Activated CD8-positive, alpha-beta T cell treated with anti-CD3 and anti-CD28 coated beads for 36 hours (primary cell): ENCODE measurements at regions of chr15 and their contacts with region 1.

Region 1: GRCh38 chr15:81296673-81297072 is 27.3 kb downstream of the STARD5 start:
- DNase-seq: peak; percentile 89
- ATAC-seq: peak; percentile 49
- H3K4me3 Mint-ChIP-seq: peak overlapping the region; percentile 98
- H3K27ac Mint-ChIP-seq: peak overlapping the region; percentile 98
- H3K4me1 Mint-ChIP-seq: peaks cover 51% of the 10 kb centered on the region
- H3K27me3 Mint-ChIP-seq: no peaks in the 10 kb centered on the region
- CTCF ChIP-seq: no peak

Region 2: DNA sequence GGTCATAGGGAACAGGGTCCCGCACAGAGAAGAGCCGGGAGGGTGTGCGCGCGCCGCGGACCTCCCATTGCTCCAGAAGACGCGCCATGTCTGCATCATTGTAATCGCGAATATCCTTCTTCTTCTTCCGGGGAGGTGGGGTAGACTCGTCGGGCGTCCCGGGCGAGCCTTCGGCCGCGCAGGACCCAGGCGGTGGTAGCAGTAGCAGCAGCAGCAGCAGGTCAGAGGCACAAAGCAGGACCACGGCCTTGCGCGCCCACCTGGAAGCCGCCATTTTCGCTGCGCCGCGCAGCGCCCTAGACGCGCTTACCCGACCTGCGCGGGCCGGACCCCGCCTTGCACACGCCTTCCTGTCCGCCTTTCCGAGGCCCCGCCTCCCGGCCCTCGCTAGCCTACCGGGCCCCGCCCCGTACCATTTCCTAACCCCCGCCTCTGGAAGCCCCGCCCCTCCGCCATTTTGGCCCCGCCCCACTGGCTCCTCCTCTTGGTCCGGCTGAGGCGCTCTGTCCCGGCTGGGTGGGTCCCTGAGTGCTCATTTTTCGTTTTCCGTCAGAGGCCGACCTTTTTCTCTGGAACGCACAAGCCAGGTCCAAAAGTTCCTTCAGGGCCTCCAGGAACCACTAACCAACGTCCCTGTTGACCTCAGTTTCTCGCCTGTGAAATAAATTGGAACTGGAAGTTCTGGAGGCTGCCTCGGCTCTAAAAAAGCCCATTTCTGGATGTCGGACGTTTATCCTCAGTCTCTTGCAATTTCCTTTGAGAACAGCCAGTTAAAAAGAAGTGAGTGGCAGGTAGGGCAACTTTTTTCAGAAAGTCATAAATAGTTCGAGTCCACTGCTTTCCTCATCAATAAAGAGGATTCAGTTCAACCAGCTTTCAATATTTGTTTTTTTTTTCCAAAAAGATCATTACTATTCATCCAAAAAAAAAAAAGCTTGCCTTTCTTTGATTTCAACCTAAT is 306.9 kb before region 1 on chr15 and contains the start of gene MESD:
- CTCF ChIA-PET with region 1: no interaction called
- POLR2A ChIA-PET with region 1: no interaction called
- intact Hi-C with region 1: loop called (anchors 10 kb)
- DNase-seq: peak; percentile 99
- ATAC-seq: peak; percentile 99
- H3K4me3 Mint-ChIP-seq: peak within 1 kb of the TSS; percentile 95
- H3K27ac Mint-ChIP-seq: peak within 1 kb of the TSS; percentile 93
- H3K4me1 Mint-ChIP-seq: peaks cover 44% of the 10 kb centered on the region
- H3K27me3 Mint-ChIP-seq: no peaks in the 10 kb centered on the region
- CTCF ChIP-seq: no peak
- total RNA-seq, gene MESD: 15.8 to 16.5 TPM

Region 3: DNA sequence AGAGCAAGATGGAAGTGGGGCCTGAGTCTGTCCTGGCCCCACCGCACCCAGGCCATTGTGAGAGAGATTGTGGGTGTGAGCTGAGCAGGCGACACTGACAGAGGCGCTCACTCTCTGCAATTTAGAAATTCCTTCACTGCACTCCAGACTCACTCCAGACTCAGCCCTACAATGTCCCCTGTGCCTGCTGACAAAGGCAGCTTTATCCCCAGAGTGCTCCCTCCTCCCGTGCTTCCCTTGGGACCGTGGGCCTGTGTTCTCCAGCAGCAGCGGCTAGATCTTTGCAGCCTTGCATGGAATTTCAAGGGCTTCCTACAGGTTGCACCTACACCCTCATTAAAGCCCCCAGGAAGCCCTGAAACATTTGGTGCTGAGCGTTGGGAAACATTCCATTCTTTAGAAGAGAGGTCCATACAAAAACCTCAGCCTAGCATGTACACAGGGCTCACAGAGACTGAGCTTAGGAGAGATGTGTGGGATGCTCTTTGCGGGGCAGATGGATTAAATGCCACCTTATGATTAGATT is 101.3 kb before region 1 on chr15:
- CTCF ChIA-PET with region 1: no interaction called
- POLR2A ChIA-PET with region 1: no interaction called
- intact Hi-C with region 1: no loop called
- DNase-seq: no peak
- ATAC-seq: no peak
- H3K4me3 Mint-ChIP-seq: no peak overlapping the region
- H3K27ac Mint-ChIP-seq: no peak overlapping the region
- H3K4me1 Mint-ChIP-seq: no peaks in the 10 kb centered on the region
- H3K27me3 Mint-ChIP-seq: peaks cover 5% of the 10 kb centered on the region
- CTCF ChIP-seq: no peak

Region 4: GRCh38 chr15:81239190-81239589 is 57.5 kb before region 1 on chr15:
- CTCF ChIA-PET with region 1: no interaction called
- POLR2A ChIA-PET with region 1: no interaction called
- intact Hi-C with region 1: no loop called
- DNase-seq: no peak
- ATAC-seq: no peak
- H3K4me3 Mint-ChIP-seq: no peak overlapping the region
- H3K27ac Mint-ChIP-seq: no peak overlapping the region
- H3K4me1 Mint-ChIP-seq: no peaks in the 10 kb centered on the region
- H3K27me3 Mint-ChIP-seq: no peaks in the 10 kb centered on the region
- CTCF ChIP-seq: no peak

Region 5: GRCh38 chr15:81286621-81287121 is 10.0 kb before region 1 on chr15:
- CTCF ChIA-PET with region 1: interaction called, 18 read pairs
- POLR2A ChIA-PET with region 1: interaction called, 42 read pairs
- intact Hi-C with region 1: no loop called
- DNase-seq: peak; percentile 41
- ATAC-seq: peak; percentile 89
- H3K4me3 Mint-ChIP-seq: peak overlapping the region; percentile 79
- H3K27ac Mint-ChIP-seq: peak overlapping the region; percentile 97
- H3K4me1 Mint-ChIP-seq: peaks cover 78% of the 10 kb centered on the region
- H3K27me3 Mint-ChIP-seq: no peaks in the 10 kb centered on the region
- CTCF ChIP-seq: no peak

Region 6: GRCh38 chr15:81312790-81313543 is 16.3 kb after region 1 on chr15:
- CTCF ChIA-PET with region 1: interaction called, 10 read pairs
- POLR2A ChIA-PET with region 1: interaction called, 15 read pairs
- intact Hi-C with region 1: no loop called
- DNase-seq: no peak
- ATAC-seq: no peak
- H3K4me3 Mint-ChIP-seq: no peak overlapping the region
- H3K27ac Mint-ChIP-seq: peak overlapping the region; percentile 69
- H3K4me1 Mint-ChIP-seq: peaks cover 72% of the 10 kb centered on the region
- H3K27me3 Mint-ChIP-seq: no peaks in the 10 kb centered on the region
- CTCF ChIP-seq: no peak

Region 7: DNA sequence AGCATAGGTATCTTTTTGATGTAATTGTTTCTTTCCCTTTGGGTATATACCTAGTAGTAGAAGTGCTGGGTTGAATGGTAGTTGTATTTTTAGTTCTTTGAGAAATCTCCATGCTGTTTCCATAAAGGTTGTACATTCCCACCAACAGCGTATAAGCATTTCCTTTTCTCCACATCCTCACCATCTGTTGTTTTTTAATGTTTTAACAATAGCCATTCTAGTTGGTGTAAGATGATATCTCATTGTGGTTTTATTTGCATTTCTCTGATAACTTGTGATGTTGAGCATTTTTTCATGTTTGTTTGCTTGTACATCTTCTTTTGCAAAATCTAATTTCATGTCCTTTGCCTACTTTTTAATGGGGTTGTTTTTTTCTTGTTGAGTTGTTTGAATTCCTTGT is 157.4 kb after region 1 on chr15:
- CTCF ChIA-PET with region 1: no interaction called
- POLR2A ChIA-PET with region 1: no interaction called
- intact Hi-C with region 1: no loop called
- DNase-seq: no peak
- ATAC-seq: no peak
- H3K4me3 Mint-ChIP-seq: no peak overlapping the region
- H3K27ac Mint-ChIP-seq: no peak overlapping the region
- H3K4me1 Mint-ChIP-seq: peaks cover 10% of the 10 kb centered on the region
- H3K27me3 Mint-ChIP-seq: no peaks in the 10 kb centered on the region
- CTCF ChIP-seq: no peak

Region 8: GRCh38 chr15:82530606-82531379 is 1234.1 kb after region 1 on chr15:
- CTCF ChIA-PET with region 1: no interaction called
- POLR2A ChIA-PET with region 1: no interaction called
- intact Hi-C with region 1: loop called (anchors 10 kb)
- DNase-seq: peak; percentile 86
- ATAC-seq: peak; percentile 92
- H3K4me3 Mint-ChIP-seq: peak overlapping the region; percentile 40
- H3K27ac Mint-ChIP-seq: peak overlapping the region; percentile 63
- H3K4me1 Mint-ChIP-seq: peaks cover 15% of the 10 kb centered on the region
- H3K27me3 Mint-ChIP-seq: no peaks in the 10 kb centered on the region
- CTCF ChIP-seq: peak; percentile 76